ENCODE measurements at regions of chr2 and their contacts with region 1.

Region 1: GRCh38 chr2:98039085-98039756 is 43.5 kb upstream of the TMEM131 start:
- H3K4me3 Mint-ChIP-seq: no peak overlapping the region
- H3K27ac Mint-ChIP-seq: no peak overlapping the region
- H3K4me1 Mint-ChIP-seq: peaks cover 24% of the 10 kb centered on the region
- H3K27me3 Mint-ChIP-seq: peaks cover 89% of the 10 kb centered on the region

Region 2: DNA sequence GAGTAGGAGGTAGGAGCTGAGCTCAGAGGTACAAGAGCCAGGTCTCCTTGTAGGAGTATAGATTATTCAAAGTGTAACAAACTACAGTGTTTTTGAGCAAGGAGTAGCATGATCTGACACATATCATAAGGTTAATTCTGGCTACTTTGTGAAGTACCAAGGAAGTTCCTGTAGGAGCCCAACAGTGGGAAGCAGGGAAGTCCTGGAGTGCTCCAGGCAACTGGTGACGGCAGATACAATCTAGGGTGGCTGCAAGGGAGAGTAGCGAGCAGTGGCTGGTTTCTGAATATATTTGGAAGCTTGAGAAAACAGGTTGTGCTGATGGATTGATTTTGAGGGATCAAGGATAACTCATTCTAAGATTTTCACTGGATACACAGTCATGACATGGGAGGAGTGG is 149.1 kb before region 1 on chr2:
- intact Hi-C with region 1: no loop called
- H3K4me3 Mint-ChIP-seq: no peak overlapping the region
- H3K27ac Mint-ChIP-seq: no peak overlapping the region
- H3K4me1 Mint-ChIP-seq: peaks cover 9% of the 10 kb centered on the region
- H3K27me3 Mint-ChIP-seq: no peaks in the 10 kb centered on the region

Region 3: DNA sequence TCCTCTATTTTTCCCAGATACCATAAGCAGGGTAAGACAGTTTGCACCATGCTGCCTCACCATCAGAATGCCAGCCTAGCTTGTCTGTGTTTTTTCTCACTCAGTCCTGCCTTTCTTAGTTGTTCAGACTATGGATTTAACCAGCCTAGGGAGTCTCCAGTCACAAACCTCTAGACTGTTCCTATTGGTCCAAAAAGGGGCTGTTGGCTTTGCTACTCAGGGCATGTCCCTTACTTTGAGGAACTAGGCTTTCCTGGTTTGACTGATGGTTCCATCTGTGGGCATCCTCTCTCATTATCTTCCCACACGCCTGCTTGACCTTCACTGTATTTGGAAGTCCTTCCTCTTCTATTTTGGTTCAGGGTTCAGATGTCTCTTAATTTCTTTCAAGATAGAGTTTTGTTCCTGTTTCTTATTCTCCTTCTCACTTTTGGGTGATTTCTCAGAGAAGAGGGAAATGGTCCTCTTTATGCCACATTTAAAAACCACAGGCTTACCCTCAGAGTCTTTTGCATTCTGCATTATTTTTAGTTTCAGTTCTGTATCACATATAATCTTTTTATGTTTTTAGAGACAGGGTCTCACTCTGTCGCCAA is 12.2 kb before region 1 on chr2:
- intact Hi-C with region 1: loop called (anchors 1 kb)
- H3K4me3 Mint-ChIP-seq: peak overlapping the region; percentile 15
- H3K27ac Mint-ChIP-seq: peak overlapping the region; percentile 47
- H3K4me1 Mint-ChIP-seq: peaks cover 45% of the 10 kb centered on the region
- H3K27me3 Mint-ChIP-seq: peaks cover 84% of the 10 kb centered on the region

Measured in dendritic cell treated with granulocyte-macrophage colony-stimulating factor and Interleukin-4, amounts not matched to agents 40 ng/mL and 50 ng/mL, for 4 days (primary cell).